ENCODE measurements at regions of chr5 and their contacts with region 1.

Region 1: DNA sequence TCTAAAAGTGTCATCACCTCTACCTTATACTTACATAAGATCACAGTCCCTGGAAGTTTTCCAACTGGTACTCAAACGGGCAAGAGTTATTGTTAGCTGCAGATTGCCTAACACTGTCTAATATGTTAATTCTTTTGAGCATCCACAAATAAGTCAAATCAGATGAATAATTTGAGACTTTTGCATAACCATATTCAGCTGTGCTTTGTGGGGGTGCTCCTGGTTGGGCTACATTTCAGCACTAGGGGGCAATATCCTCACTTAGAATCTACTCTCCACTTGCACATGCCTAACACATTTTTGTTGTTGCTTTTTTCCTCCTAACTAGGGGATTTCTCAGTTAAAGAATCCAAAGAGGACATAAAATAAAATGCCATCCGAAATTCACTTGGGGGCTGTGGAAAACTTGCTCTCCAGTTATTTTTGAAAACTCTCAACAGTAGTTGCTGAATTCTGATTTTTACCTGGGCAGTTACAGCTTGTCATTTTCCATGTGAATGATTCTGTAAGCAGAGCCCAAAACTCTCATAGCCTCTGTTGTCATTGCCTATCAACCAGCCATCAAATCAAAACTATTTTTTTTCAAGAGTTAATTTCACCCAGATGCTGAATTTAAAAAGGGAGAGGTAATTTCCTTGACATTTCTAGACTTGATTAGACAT is 71.5 kb downstream of the TRIM36 start:
- DNase-seq: peak; percentile 70

Region 2: GRCh38 chr5:115231598-115231997 is 133.4 kb after region 1 on chr5:
- in situ Hi-C with region 1: loop called (anchors 10 kb)
- DNase-seq: no peak

Measured in SK-MEL-5 (cell line).